ENCODE measurements at regions of chr12 and their contacts with region 1.

Region 1: DNA sequence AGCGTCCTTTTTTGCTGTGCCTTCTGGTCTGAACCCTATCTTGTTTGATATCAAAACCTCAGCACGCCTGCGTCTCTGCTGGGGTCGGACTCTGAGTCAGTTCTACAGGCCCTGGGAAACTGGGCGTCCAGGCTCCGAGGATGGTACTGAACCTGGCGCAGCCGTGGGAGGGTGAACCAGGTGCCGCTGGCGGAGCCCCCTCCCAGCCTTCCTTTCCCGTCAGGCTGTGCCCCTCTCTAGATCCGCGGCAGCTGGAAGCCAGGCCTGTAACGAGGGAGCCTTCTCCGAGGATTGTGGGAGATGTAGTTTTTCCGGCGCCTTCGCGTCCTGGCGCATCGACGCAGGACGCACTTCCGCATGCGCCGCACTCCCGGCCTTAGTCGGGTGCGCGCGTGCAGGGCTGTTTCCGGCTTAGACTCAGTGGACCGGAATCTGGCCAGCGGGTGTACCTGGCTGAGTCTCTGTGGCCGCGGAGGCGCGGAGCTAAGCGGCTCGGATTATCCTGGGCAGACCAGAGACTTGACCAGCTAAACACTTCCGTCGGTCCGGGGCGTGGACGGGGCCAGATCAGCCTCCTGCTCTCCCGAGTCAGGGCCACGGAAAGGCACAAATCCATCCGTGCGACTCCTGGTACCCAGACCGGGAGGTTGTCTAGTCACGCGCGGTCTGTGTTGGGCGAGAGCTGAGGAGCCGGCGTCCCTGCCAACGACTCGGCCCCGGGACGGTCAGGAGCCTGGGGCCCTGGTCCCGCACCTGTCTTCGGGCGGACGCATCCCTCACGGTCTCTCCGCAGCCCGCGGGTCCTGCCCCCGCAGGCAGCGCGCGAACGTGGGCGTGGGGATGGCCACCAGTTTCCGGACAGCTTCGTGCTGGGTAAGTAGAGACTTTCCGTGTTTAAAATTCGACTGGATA is at the start of gene ZNF26:
- DNase-seq: peak; percentile 91
- H3K4me3 ChIP-seq: peak within 1 kb of the TSS; percentile 76 to 99 (median 82)
- H3K27ac ChIP-seq: peak within 1 kb of the TSS; percentile 66
- H3K4me1 ChIP-seq: peaks cover 3% of the 10 kb centered on the region
- H3K27me3 ChIP-seq: no peaks in the 10 kb centered on the region
- CTCF ChIP-seq: no peak
- total RNA-seq, gene ZNF26: 13.5 to 22.0 TPM

Region 2: GRCh38 chr12:132754160-132754932 is 231.9 kb before region 1 on chr12:
- CTCF ChIA-PET with region 1: no interaction called
- dilution Hi-C with region 1: no loop called
- in situ Hi-C with region 1: no loop called
- intact Hi-C with region 1: no loop called
- DNase-seq: no peak
- H3K4me3 ChIP-seq: no peak overlapping the region
- H3K27ac ChIP-seq: no peak overlapping the region
- H3K4me1 ChIP-seq: peaks cover 4% of the 10 kb centered on the region
- H3K27me3 ChIP-seq: no peaks in the 10 kb centered on the region
- CTCF ChIP-seq: no peak

Region 3: DNA sequence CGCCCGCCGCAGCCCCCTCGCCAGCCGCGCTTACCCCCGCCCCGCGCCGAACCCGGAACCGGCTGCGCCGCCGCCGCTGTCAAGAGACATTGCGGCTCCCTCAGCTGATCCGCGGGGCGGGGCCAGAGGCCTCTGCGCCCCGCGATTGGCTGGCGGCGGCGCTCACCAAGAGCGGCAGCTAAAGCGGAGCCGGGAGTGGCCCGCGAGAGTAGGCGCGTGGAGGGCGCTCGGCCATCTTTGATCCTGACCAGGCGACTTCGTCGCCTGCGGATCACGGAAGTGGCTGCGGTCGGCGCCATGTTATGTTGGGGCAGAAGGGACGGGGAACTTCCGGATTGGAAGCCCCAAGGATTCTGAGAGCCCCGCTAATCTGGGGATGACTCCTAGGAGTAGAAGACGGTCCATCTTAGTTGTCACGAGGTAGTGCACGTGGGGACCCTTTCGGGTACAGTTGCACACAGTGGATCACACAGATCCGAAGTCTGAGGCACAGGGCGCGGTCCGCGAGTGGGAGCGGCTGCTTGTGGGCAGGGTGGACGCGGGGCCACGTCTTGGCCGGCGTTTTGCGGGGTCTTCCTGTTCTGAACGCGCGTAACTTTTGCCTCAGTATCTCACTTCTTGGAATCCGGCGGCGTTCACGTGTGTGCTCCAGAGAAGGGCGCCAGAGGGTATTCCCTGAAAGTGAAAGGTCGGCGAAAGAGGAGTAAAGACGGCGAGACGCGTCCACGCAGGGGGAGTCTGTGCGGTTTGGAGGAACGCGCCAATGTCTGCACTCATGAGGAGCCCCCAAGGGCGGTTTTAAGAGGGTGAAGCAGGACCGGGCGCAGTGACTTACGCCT is 98.5 kb before region 1 on chr12 and contains the start of gene CHFR:
- CTCF ChIA-PET with region 1: no interaction called
- dilution Hi-C with region 1: no loop called
- in situ Hi-C with region 1: no loop called
- intact Hi-C with region 1: loop called (anchors 1 kb)
- DNase-seq: peak; percentile 97
- H3K4me3 ChIP-seq: peak within 1 kb of the TSS; percentile 72 to 97 (median 76)
- H3K27ac ChIP-seq: peak within 1 kb of the TSS; percentile 82
- H3K4me1 ChIP-seq: no peaks in the 10 kb centered on the region
- H3K27me3 ChIP-seq: no peaks in the 10 kb centered on the region
- CTCF ChIP-seq: no peak
- total RNA-seq, gene CHFR: 46.2 to 47.5 TPM

Region 4: DNA sequence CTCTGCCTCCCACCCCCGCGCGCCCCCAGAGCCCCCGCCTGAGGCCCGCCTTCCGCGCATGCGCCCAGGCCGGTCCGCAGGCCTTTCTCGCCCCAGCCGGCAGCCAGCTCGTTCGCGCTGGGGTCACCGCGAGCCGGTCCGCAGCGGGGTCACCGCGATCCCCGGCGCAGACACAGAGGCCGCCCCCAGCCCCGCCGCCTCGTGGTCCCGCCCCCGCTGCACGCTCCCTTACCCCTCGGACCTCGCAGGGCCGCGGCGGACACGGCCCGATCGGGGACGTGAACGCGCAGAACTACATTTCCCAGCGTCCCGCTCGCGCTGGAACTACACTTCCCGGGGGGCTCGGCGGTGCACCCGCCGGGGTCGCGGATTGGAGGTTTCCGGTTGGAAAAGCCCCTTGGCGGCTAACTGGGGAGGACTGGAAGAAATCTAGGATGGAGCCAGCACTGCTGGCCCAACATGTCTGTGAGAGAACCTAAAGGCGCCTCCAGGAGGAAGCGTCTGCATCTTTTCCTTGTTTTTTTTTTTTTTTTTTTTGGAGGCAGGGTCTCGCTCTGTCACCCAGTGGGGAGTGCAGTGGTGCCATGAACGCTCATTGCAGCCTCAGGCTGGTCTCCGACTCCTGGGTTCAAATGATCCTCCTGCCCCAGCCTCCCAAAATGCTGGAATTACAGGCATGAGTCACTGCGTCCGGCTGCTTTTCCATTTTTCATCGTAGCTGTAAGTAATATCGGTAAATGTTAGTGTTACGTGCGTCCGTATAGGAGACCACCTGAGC is 30.1 kb before region 1 on chr12 and contains the start of gene ZNF605:
- CTCF ChIA-PET with region 1: no interaction called
- dilution Hi-C with region 1: no loop called
- in situ Hi-C with region 1: no loop called
- intact Hi-C with region 1: loop called (anchors 1 kb)
- DNase-seq: peak; percentile 83
- H3K4me3 ChIP-seq: peak within 1 kb of the TSS; percentile 85 to 100 (median 88)
- H3K27ac ChIP-seq: peak within 1 kb of the TSS; percentile 64
- H3K4me1 ChIP-seq: peaks cover 8% of the 10 kb centered on the region
- H3K27me3 ChIP-seq: no peaks in the 10 kb centered on the region
- CTCF ChIP-seq: no peak
- total RNA-seq, gene ZNF605: 13.3 to 14.4 TPM

Region 5: GRCh38 chr12:133037207-133038005 is 51.1 kb after region 1 on chr12 and contains the start of gene ZNF84:
- CTCF ChIA-PET with region 1: no interaction called
- dilution Hi-C with region 1: no loop called
- in situ Hi-C with region 1: no loop called
- intact Hi-C with region 1: loop called (anchors 1 kb)
- DNase-seq: peak; percentile 99
- H3K4me3 ChIP-seq: peak within 1 kb of the TSS; percentile 64 to 95 (median 89)
- H3K27ac ChIP-seq: peak within 1 kb of the TSS; percentile 82
- H3K4me1 ChIP-seq: no peaks in the 10 kb centered on the region
- H3K27me3 ChIP-seq: no peaks in the 10 kb centered on the region
- CTCF ChIP-seq: no peak
- total RNA-seq, gene ZNF84: 18.9 to 21.5 TPM

Region 6: DNA sequence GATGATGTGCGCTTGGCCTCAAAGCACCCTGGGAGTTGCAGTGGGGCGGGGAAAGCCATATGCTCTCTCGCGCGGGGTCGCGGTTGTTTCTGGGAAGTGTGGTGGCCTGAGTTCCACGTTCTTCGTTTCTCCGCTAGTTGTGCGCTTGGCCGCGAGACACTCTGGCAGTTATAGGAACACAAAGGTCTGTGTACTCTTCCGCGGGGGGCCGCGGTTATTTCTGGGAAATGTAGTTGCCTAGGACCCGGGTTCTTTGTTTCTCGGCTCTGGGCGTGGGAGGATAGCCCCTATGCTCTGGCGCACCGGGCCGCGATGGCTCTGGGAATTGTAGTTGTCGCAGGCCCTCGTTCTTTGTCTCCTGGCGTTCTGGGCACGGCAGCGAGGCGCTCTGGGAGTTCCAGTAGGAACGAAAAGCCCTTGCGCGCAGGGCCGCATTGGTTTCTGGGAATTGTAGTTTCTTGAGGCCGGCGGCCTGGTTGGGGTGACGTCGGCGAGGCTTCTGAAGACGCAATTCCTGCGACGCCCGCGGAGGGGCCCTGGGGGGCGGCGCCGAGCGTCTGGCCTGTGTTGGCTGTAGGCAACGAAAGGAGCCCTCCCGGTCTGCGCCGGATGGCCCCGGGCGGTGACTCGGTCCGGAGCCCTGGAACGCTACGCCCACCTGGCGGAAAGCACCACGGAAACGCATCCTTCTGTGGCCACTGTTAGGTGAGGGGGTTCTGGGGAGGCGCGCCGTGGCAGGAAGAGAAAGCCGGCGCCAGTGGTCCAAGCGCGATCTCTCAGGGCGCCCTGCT is 94.3 kb after region 1 on chr12 and contains the start of gene ZNF140:
- CTCF ChIA-PET with region 1: no interaction called
- dilution Hi-C with region 1: no loop called
- in situ Hi-C with region 1: no loop called
- intact Hi-C with region 1: loop called (anchors 1 kb)
- DNase-seq: peak; percentile 94
- H3K4me3 ChIP-seq: peak within 1 kb of the TSS; percentile 64 to 100 (median 72)
- H3K27ac ChIP-seq: peak within 1 kb of the TSS; percentile 86
- H3K4me1 ChIP-seq: peaks cover 5% of the 10 kb centered on the region
- H3K27me3 ChIP-seq: no peaks in the 10 kb centered on the region
- CTCF ChIP-seq: peak in 1 of 2 donors; percentile 33
- total RNA-seq, gene ZNF140: 15.7 to 31.3 TPM

Region 7: GRCh38 chr12:133130038-133130807 is 144.0 kb after region 1 on chr12 and contains the starts of genes ZNF10 and ZNF891:
- CTCF ChIA-PET with region 1: no interaction called
- dilution Hi-C with region 1: no loop called
- in situ Hi-C with region 1: no loop called
- intact Hi-C with region 1: loop called (anchors 5 kb)
- DNase-seq: peak; percentile 97
- H3K4me3 ChIP-seq: peak within 1 kb of the TSS; percentile 63 to 91 (median 84)
- H3K27ac ChIP-seq: peak within 1 kb of the TSS; percentile 73
- H3K4me1 ChIP-seq: no peaks in the 10 kb centered on the region
- H3K27me3 ChIP-seq: no peaks in the 10 kb centered on the region
- CTCF ChIP-seq: no peak
- total RNA-seq, gene ZNF10: 8.4 to 14.2 TPM
- total RNA-seq, gene ZNF891: 0.83 to 1.1 TPM

Measured in mammary epithelial cell (primary cell).